ENCODE measurements at regions of chr20 and their contacts with region 1.

Region 1: GRCh38 chr20:24781422-24781980 is 167.6 kb upstream of the CST7 start:
- DNase-seq: peak in 1 of 3 donors; percentile 68
- ATAC-seq: peak; percentile 56 to 62
- H3K4me3 ChIP-seq: no peak overlapping the region
- H3K27ac ChIP-seq: no peak overlapping the region
- H3K4me1 ChIP-seq: no peaks in the 10 kb centered on the region
- H3K27me3 ChIP-seq: no peaks in the 10 kb centered on the region

Region 2: DNA sequence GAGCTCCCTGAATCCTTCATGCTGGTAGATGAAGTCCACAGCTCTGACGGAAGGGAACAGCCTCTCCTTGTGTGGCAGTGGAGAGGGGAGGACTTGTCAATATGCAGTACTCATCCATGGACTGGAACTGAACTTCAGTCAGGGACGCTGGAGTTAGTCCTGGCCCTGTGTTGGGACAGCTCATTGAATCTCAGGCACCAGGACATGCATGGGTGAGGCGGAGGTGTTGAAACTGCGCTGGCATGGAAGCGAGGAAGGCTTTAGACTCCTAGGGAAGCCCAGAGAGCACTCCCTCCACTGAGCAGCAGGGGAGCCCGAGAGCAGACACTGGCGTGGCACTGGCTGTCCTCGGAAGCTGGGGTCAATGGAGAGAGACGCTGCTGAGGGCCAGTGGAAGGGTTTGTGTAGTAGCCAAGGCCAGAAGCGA is 631.6 kb before region 1 on chr20:
- intact Hi-C with region 1: loop called in 1 of 4 experiments (anchors 10 kb)
- DNase-seq: peak; percentile 37 to 71 (median 68)
- ATAC-seq: peak; percentile 67 to 80
- H3K4me3 ChIP-seq: no peak overlapping the region
- H3K27ac ChIP-seq: no peak overlapping the region
- H3K4me1 ChIP-seq: no peaks in the 10 kb centered on the region
- H3K27me3 ChIP-seq: no peaks in the 10 kb centered on the region

Region 3: DNA sequence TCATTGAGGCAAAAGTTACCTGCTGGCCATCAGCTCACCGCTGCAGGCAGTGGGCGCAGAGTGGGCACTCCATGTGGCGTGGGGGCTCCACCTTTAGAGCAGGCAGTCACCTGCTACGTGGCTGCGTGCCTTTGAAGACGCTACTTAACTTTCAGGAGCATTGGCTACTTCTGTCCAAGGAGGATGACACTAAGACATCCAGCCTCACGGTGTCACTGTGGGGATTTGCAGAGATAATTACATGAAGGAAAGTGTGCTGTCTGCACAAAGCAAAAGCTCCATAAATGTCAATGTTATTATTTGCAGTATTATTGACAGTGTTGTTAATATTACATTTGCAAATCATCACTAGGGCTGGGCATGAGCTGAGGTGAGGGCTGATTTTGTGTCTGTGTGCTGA is 478.1 kb before region 1 on chr20:
- intact Hi-C with region 1: loop called in 2 of 4 experiments (anchors 5 to 10 kb)
- DNase-seq: no peak
- ATAC-seq: peak; percentile 39 to 52
- H3K4me3 ChIP-seq: no peak overlapping the region
- H3K27ac ChIP-seq: no peak overlapping the region
- H3K4me1 ChIP-seq: no peaks in the 10 kb centered on the region
- H3K27me3 ChIP-seq: no peaks in the 10 kb centered on the region